ENCODE measurements at regions of chr10 and their contacts with region 1.

Region 1: DNA sequence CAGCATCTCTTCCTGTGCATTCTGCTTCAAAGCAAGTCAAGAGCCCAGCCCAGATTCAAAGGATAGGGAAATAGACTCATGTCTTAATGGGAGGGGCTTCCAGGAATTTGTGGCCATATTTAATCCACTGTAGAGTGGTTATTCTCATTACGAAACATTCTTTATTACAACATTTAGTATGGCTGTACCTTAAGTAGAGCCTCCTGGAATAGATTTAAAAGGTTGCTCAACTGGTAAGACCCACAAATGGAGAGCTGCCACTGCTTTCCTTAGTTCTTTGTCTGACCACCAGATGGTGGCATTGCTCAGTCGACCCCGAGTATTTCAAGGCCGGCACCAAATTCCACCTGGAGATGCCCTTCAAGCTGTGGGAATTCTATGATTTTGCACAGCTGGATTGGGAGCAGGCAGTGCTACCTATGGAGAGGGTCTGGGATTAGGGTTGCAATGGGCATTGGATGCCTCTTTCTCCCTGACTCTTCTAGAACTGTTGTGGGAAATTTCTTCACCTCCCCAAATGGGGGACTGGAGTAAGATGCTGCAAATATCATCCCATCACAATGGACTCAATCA is 102.2 kb downstream of the RBM20 start:
- DNase-seq: peak; percentile 51
- CTCF ChIP-seq: peak; percentile 50

Region 2: DNA sequence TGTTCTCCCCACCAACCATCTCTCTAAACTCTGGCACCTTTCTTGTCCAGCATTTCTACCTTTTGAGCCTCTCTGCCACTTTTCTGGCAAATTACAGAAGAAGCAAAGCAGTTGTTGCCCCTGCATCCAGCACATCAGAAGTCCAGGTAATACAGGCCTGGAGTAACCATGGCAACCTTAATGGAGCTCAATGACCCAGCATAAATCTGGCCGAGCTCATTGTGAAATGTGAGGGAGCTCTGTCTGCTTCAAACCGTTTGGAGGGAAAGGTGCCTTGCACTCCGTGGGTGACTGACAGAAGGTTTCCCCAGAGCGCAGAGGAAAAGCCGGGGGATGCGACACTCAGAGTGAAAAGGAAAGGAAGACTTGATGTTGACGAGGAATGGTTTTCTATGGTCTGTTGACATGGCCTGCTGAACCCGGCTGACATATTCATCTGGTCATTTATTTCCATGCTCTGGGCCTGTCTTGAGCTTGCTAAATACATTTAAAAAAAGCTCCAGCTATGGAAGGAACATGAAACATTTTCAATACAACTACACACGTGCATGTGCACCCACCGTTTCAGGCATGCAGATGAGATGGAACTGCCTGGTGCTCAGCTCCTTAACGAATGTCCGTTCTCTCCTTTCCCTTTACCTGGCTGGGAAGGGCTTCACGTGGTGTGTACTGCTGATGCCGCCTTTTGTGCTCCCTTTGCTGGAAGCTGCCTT is 405.4 kb after region 1 on chr10:
- in situ Hi-C with region 1: no loop called
- DNase-seq: no peak
- CTCF ChIP-seq: no peak

Region 3: DNA sequence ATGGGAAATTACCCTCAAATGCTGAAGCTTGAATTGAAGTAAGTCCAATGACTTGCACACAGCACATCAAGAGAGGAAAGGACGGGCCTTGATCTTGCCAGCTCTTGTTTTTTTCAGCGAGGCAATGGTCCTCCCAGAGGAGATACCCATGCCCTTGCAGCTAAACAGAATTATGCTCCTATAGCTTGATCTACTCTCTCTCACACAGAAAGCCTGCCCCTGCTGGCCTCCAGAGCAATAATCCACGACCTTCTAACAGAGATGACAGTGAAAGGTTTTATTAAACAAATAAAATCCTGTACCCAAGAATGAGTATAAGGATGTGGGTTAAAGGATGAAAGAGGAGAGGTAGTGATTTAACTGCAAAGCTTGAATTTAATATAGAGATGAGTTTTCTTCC is 598.5 kb after region 1 on chr10:
- in situ Hi-C with region 1: loop called (anchors 25 kb)
- DNase-seq: no peak
- CTCF ChIP-seq: no peak

Measured in GM13976 (cell line).